K562 (cell line): ENCODE measurements at regions of chr16 and their contacts with region 1.

Region 1: GRCh38 chr16:3880623-3881498 is at the start of gene CREBBP:
- DNase-seq: peak; percentile 90 to 94 (median 90)
- ATAC-seq: peak; percentile 92
- H3K4me3 ChIP-seq: peak within 1 kb of the TSS; percentile 68
- H3K27ac ChIP-seq: peak within 1 kb of the TSS; percentile 78
- H3K4me1 ChIP-seq: peaks cover 11 to 19% of the 10 kb centered on the region in 2 experiments
- H3K27me3 ChIP-seq: no peaks in the 10 kb centered on the region
- CTCF ChIP-seq: no peak
- EP300 ChIP-seq: no peak
- POLR2A ChIP-seq: no peak; the same call in 1 of the 2 replicates
- RAD21 ChIP-seq: no peak
- polyA plus RNA-seq, gene CREBBP: 0.70 to 2.5 TPM

Region 2: GRCh38 chr16:3690470-3690928 is 190.4 kb before region 1 on chr16:
- CTCF ChIA-PET with region 1: interaction called, 7 read pairs
- POLR2A ChIA-PET with region 1: interaction called, 3 read pairs
- in situ Hi-C with region 1: no loop called
- intact Hi-C with region 1: loop called (anchors 1 kb)
- DNase-seq: peak; percentile 83 to 84 (median 83)
- ATAC-seq: peak; percentile 99
- H3K4me3 ChIP-seq: no peak overlapping the region
- H3K27ac ChIP-seq: no peak overlapping the region
- H3K4me1 ChIP-seq: peaks cover 7 to 14% of the 10 kb centered on the region in 2 experiments; a peak in 4 of 5 replicates
- H3K27me3 ChIP-seq: no peaks in the 10 kb centered on the region
- CTCF ChIP-seq: peak; percentile 90 to 94 (median 92)
- EP300 ChIP-seq: no peak
- POLR2A ChIP-seq: no peak
- RAD21 ChIP-seq: peak; percentile 62 to 84

Region 3: DNA sequence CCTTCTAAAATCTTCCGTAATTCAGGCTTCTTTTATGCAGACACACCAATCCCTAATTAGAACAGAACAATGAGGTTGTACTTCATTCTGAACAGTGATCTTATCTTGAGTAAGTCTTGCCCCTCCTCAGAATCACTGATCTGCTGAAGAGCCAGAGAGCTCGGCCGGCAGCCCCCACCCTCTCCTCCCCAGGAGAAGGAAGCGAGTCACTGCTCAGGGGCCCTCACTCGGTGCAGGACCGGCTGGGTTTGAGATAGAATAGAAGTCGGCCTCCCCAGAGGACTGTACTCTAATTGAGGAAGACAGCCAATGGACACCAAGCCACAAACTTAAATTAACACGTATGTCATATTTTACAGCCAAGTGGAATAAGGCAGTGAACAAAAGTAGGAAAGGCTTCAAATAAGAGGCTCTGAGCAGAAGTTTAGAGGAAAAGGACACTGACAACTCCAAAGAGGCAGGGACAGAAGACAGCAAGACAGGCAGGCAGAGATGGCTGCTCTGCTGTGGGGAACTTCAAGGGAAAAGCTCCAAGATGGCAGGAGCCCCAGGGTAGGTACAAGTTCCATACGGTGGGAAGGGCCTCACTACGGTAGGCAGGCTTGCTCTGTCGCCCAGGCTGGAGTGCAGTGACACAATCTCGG is 18.9 kb before region 1 on chr16:
- CTCF ChIA-PET with region 1: no interaction called
- POLR2A ChIA-PET with region 1: interaction called, 86 read pairs
- in situ Hi-C with region 1: no loop called
- intact Hi-C with region 1: no loop called
- DNase-seq: peak; percentile 38 to 78 (median 56)
- ATAC-seq: peak; percentile 93
- H3K4me3 ChIP-seq: no peak overlapping the region
- H3K27ac ChIP-seq: peak overlapping the region; percentile 33; the same call in 2 of the 3 replicates
- H3K4me1 ChIP-seq: peaks cover 25 to 27% of the 10 kb centered on the region in 2 experiments
- H3K27me3 ChIP-seq: no peaks in the 10 kb centered on the region
- CTCF ChIP-seq: no peak
- EP300 ChIP-seq: no peak
- POLR2A ChIP-seq: no peak
- RAD21 ChIP-seq: no peak

Region 4: GRCh38 chr16:3909791-3910570 is 29.1 kb after region 1 on chr16:
- CTCF ChIA-PET with region 1: no interaction called
- POLR2A ChIA-PET with region 1: no interaction called
- in situ Hi-C with region 1: no loop called
- intact Hi-C with region 1: no loop called
- DNase-seq: no peak
- ATAC-seq: peak; percentile 25; the same call in 2 of the 3 replicates
- H3K4me3 ChIP-seq: no peak overlapping the region
- H3K27ac ChIP-seq: no peak overlapping the region
- H3K4me1 ChIP-seq: no peaks in the 10 kb centered on the region; a peak in 1 of 5 replicates
- H3K27me3 ChIP-seq: peaks cover 8 to 51% of the 10 kb centered on the region in 2 experiments; a peak in 4 of 5 replicates
- CTCF ChIP-seq: no peak
- EP300 ChIP-seq: no peak
- POLR2A ChIP-seq: no peak
- RAD21 ChIP-seq: no peak

Region 5: GRCh38 chr16:3971261-3971660 is 90.4 kb after region 1 on chr16:
- CTCF ChIA-PET with region 1: no interaction called
- POLR2A ChIA-PET with region 1: no interaction called
- in situ Hi-C with region 1: no loop called
- intact Hi-C with region 1: no loop called
- DNase-seq: no peak
- ATAC-seq: peak; percentile 42; the same call in 2 of the 3 replicates
- H3K4me3 ChIP-seq: no peak overlapping the region
- H3K27ac ChIP-seq: no peak overlapping the region
- H3K4me1 ChIP-seq: peaks cover 0 to 2% of the 10 kb centered on the region in 2 experiments; a peak in 1 of 5 replicates
- H3K27me3 ChIP-seq: peaks cover 38 to 74% of the 10 kb centered on the region in 2 experiments
- CTCF ChIP-seq: no peak
- EP300 ChIP-seq: no peak
- POLR2A ChIP-seq: no peak
- RAD21 ChIP-seq: no peak